ENCODE measurements at regions of chr16 and their contacts with region 1.

Region 1: GRCh38 chr16:52591934-52592592 is 45.1 kb upstream of the TOX3 start:
- DNase-seq: no peak
- H3K4me3 Mint-ChIP-seq: no peak overlapping the region
- H3K27ac Mint-ChIP-seq: no peak overlapping the region
- H3K4me1 Mint-ChIP-seq: no peaks in the 10 kb centered on the region
- H3K27me3 Mint-ChIP-seq: no peaks in the 10 kb centered on the region

Region 2: GRCh38 chr16:52528393-52529065 is 63.5 kb before region 1 on chr16:
- CTCF ChIA-PET with region 1: no interaction called
- intact Hi-C with region 1: no loop called
- DNase-seq: no peak
- H3K4me3 Mint-ChIP-seq: no peak overlapping the region
- H3K27ac Mint-ChIP-seq: no peak overlapping the region
- H3K4me1 Mint-ChIP-seq: no peaks in the 10 kb centered on the region
- H3K27me3 Mint-ChIP-seq: no peaks in the 10 kb centered on the region

Region 3: GRCh38 chr16:52611817-52612673 is 20.0 kb after region 1 on chr16:
- CTCF ChIA-PET with region 1: no interaction called
- intact Hi-C with region 1: loop called (anchors 1 kb)
- DNase-seq: no peak
- H3K4me3 Mint-ChIP-seq: no peak overlapping the region
- H3K27ac Mint-ChIP-seq: no peak overlapping the region
- H3K4me1 Mint-ChIP-seq: no peaks in the 10 kb centered on the region
- H3K27me3 Mint-ChIP-seq: no peaks in the 10 kb centered on the region